GM10248 (cell line): ENCODE measurements at regions of chr12 and their contacts with region 1.

Region 1: GRCh38 chr12:100566887-100567637 is 6.4 kb upstream of the GAS2L3 start:
- DNase-seq: peak; percentile 63
- CTCF ChIP-seq: no peak

Region 2: GRCh38 chr12:100554608-100555077 is 12.4 kb before region 1 on chr12:
- CTCF ChIA-PET with region 1: interaction called, 19 read pairs
- POLR2A ChIA-PET with region 1: no interaction called
- DNase-seq: no peak
- CTCF ChIP-seq: peak; percentile 49

Region 3: DNA sequence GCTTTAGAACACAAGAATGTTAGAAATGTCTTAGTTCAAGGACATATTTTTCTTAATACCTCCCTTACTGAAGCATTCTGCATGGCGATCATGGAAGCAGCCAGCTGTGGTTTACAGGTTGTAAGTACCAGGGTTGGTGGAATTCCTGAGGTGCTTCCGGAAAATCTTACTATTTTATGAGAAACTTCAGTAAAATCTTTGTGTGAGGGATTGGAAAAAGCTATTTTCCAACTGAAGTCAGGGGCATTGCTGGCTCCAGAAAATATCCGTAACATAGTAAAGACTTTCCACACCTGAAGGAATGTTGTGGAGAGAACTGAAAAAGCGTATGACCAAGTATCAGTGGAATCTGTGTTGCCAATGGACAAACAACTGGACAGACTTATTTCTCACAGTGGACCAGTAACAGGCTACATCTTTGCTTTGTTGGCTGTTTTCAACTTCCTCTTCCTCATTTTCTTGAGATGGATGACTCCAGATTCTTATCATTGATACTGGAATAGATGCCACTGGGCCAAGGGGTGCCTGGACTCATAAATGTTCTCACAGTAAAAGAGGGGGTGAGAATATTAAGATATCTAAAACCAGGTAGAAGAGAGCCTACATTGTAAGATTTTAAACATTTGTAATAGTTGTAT is 12.7 kb after region 1 on chr12:
- CTCF ChIA-PET with region 1: no interaction called
- POLR2A ChIA-PET with region 1: no interaction called
- DNase-seq: no peak
- CTCF ChIP-seq: no peak

Region 4: DNA sequence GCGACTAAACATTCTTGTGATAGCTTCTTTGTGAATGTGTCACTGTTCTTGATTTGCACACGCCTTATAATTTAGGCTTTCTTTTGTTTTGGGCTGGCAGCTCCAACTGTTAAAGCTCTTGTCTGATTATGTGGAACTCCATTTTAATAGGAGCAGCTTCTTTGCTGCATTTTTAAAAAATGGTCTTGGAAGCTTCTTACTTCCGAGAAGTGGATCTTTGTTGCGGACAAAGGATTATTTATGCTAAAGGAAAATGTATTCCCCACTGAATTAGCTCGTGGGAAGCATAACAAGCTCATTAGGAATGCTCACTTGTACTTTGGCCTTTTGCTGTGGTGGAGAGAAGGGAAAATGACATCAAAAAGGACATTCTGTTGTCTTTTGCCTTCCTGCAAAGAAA is 26.4 kb after region 1 on chr12:
- CTCF ChIA-PET with region 1: interaction called, 10 read pairs
- POLR2A ChIA-PET with region 1: no interaction called
- DNase-seq: no peak
- CTCF ChIP-seq: no peak

Region 5: DNA sequence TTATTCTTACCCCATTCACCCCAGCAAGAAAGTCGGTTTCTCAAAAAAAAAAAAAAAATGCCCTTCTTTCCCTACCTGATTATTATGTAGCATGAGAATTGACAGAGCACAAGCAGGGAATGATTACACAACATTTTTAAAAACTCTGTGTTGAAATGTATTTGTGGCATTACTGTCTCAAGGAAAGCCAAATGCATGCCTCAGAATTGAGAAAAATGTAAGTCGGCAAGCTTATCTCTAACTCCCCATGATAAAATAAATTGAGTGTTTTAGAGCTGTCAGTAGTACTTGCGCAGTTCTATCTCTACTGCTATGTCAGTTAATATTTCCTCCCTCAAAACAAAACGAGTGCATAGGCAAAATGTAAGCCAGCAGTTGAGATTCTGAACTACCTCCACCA is 253.3 kb after region 1 on chr12:
- CTCF ChIA-PET with region 1: no interaction called
- POLR2A ChIA-PET with region 1: no interaction called
- DNase-seq: no peak
- CTCF ChIP-seq: no peak